MCF 10A (cell line): ENCODE measurements at regions of chr6 and their contacts with region 1.

Region 1: GRCh38 chr6:109036574-109037294 is 57.9 kb downstream of the SESN1 start:
- DNase-seq: no peak
- H3K4me3 Mint-ChIP-seq: no peak overlapping the region
- H3K27ac Mint-ChIP-seq: no peak overlapping the region
- H3K4me1 Mint-ChIP-seq: peaks cover 6% of the 10 kb centered on the region
- H3K27me3 Mint-ChIP-seq: peaks cover 11% of the 10 kb centered on the region
- CTCF ChIP-seq: no peak

Region 2: DNA sequence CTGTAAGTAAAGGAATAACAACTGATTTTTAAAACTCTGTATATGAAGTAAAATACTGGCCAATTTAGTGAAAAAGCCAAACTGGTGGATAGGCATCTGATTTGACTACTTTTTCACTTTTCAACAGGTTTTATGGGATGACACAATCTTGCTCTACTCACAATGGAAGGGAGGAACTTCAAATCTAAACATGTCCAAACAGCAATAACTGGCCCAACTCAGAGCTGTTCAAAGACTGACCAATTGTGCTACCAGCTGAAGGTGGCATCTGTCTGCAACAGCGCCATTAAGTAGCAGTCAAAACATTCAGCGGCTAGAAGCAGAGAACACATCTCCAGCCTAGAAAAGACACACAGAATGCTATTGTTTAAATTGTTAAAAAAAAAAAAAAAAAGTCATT is 13.3 kb after region 1 on chr6:
- CTCF ChIA-PET with region 1: interaction called, 4 read pairs
- POLR2A ChIA-PET with region 1: interaction called, 34 read pairs
- intact Hi-C with region 1: no loop called
- DNase-seq: peak; percentile 41
- H3K4me3 Mint-ChIP-seq: no peak overlapping the region
- H3K27ac Mint-ChIP-seq: peak overlapping the region; percentile 70
- H3K4me1 Mint-ChIP-seq: peaks cover 25% of the 10 kb centered on the region
- H3K27me3 Mint-ChIP-seq: no peaks in the 10 kb centered on the region
- CTCF ChIP-seq: no peak